MCF 10A (cell line): ENCODE measurements at regions of chr2 and their contacts with region 1.

Region 1: GRCh38 chr2:120026890-120027289 is 14.0 kb downstream of the EPB41L5 start:
- DNase-seq: no peak
- H3K4me3 Mint-ChIP-seq: no peak overlapping the region
- H3K27ac Mint-ChIP-seq: no peak overlapping the region
- H3K4me1 Mint-ChIP-seq: no peaks in the 10 kb centered on the region
- H3K27me3 Mint-ChIP-seq: no peaks in the 10 kb centered on the region
- CTCF ChIP-seq: no peak

Region 2: DNA sequence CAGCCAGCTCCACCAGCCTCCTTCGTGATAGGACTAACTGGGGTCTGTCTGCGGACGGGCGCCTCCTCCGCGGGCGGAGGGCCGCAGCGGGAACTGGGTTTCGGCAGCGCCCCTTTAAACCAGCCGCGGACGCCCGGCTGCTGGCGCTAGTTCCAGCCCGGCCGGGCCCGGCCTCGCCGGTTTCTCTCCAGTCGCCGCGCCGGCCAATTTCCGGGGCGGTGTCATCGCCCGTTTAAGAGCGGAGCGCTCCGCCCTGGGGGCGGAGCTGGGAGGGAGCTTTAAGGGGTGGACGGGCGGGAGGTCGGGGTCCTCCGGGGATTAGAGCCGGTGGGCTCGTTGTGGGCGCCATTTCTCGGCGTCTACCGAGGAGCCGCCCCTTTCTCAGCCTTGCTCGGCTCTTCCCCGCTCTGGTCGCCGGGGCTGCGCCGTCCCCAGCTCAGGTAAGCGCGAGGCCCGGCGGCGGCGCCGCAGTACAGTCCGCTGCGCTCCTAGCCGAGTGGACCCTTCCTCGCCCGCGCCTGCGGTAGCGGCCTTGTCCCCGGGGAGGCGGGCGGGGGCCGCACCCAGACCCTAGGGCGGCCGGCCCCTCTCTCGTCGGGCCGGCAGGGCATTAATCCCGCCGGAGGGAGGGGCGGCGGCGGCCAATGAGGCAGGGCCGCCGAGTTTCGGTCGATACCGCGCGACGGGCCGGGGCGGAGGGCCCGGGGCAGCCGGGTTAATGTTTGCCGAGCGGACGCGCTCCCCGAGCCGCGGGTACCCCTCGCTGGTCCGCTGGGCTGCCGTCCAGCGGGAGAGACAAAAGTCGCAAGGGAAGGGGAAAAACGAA is 13.9 kb before region 1 on chr2 and contains the start of gene EPB41L5:
- CTCF ChIA-PET with region 1: interaction called, 4 read pairs
- POLR2A ChIA-PET with region 1: interaction called, 11 read pairs
- intact Hi-C with region 1: no loop called
- DNase-seq: peak; percentile 96
- H3K4me3 Mint-ChIP-seq: peak within 1 kb of the TSS; percentile 66
- H3K27ac Mint-ChIP-seq: peak within 1 kb of the TSS; percentile 54
- H3K4me1 Mint-ChIP-seq: peaks cover 26% of the 10 kb centered on the region
- H3K27me3 Mint-ChIP-seq: no peaks in the 10 kb centered on the region
- CTCF ChIP-seq: no peak
- total RNA-seq, gene EPB41L5: 19.0 and 22.8 TPM in 2 replicates